ENCODE measurements at regions of chr14 and their contacts with region 1.

Region 1: GRCh38 chr14:103104654-103105452 is 10.3 kb downstream of the EXOC3L4 start:
- DNase-seq: no peak
- H3K4me3 ChIP-seq: no peak overlapping the region
- H3K27ac ChIP-seq: no peak overlapping the region
- H3K4me1 ChIP-seq: peaks cover 3% of the 10 kb centered on the region
- H3K27me3 ChIP-seq: peaks cover 28 to 29% of the 10 kb centered on the region in 2 experiments
- CTCF ChIP-seq: peak; percentile 99
- POLR2A ChIP-seq: no peak

Region 2: GRCh38 chr14:103078093-103078749 is 26.6 kb before region 1 on chr14:
- CTCF ChIA-PET with region 1: interaction called, 17 read pairs
- POLR2A ChIA-PET with region 1: no interaction called
- dilution Hi-C with region 1: no loop called
- intact Hi-C with region 1: no loop called
- DNase-seq: peak; percentile 69
- H3K4me3 ChIP-seq: no peak overlapping the region
- H3K27ac ChIP-seq: no peak overlapping the region
- H3K4me1 ChIP-seq: peaks cover 8% of the 10 kb centered on the region
- H3K27me3 ChIP-seq: peaks cover 0 to 2% of the 10 kb centered on the region in 2 experiments
- CTCF ChIP-seq: peak; percentile 63 to 90
- POLR2A ChIP-seq: no peak

Region 3: GRCh38 chr14:103141119-103141796 is 36.4 kb after region 1 on chr14:
- CTCF ChIA-PET with region 1: interaction called, 219 read pairs
- POLR2A ChIA-PET with region 1: no interaction called
- dilution Hi-C with region 1: no loop called
- intact Hi-C with region 1: loop called (anchors 1 kb)
- DNase-seq: peak; percentile 41
- H3K4me3 ChIP-seq: no peak overlapping the region
- H3K27ac ChIP-seq: no peak overlapping the region
- H3K4me1 ChIP-seq: no peaks in the 10 kb centered on the region
- H3K27me3 ChIP-seq: peaks cover 26 to 38% of the 10 kb centered on the region in 2 experiments
- CTCF ChIP-seq: peak; percentile 75 to 80
- POLR2A ChIP-seq: no peak

Region 4: DNA sequence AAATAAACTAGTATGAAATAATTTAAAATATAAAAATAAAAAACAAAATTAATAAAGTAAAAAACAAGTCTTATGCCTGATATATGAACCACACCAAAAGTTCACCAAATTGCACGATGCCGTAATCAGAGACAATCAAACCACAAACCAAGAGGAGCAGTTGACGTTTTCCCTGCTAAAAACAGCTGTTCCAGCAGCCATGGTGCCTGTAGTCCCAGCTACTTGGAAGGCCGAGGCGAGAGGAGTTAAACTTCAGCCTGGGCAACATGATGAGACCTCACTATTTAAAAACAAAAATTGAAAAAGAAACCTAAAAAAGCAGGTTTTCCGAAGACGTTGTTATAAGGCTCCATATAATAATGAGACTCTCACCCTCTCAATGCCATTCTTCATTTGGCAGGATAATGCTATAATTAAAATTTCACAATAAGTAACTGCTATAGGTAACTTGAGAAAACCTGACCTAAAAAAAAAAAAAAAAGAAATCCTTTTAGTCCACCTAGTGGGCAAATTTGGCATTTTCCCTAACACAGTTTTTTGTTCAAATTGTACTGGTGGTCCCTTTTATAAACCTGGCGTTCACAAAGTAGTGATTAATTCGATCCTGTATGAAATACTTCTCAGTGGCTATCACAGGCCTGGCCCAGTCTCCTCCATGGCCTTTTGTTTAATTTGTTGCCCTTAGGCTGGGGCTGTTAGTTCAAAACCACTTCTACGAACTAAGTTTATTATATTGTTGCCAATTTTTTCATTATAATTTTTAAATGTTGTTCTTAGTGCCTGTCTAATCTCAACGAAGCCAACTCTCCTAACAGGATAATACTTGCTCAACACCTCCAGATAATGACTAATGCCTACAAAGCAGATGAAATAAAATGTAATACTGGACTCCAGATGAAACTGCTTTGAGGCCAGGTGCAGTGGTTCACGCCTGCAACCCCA is 80.5 kb after region 1 on chr14:
- CTCF ChIA-PET with region 1: interaction called, 238 read pairs
- POLR2A ChIA-PET with region 1: no interaction called
- dilution Hi-C with region 1: no loop called
- intact Hi-C with region 1: loop called (anchors 1 kb)
- DNase-seq: peak; percentile 71
- H3K4me3 ChIP-seq: no peak overlapping the region
- H3K27ac ChIP-seq: no peak overlapping the region
- H3K4me1 ChIP-seq: no peaks in the 10 kb centered on the region
- H3K27me3 ChIP-seq: peaks cover 17 to 22% of the 10 kb centered on the region in 2 experiments
- CTCF ChIP-seq: peak; percentile 36 to 47
- POLR2A ChIP-seq: no peak

Region 5: DNA sequence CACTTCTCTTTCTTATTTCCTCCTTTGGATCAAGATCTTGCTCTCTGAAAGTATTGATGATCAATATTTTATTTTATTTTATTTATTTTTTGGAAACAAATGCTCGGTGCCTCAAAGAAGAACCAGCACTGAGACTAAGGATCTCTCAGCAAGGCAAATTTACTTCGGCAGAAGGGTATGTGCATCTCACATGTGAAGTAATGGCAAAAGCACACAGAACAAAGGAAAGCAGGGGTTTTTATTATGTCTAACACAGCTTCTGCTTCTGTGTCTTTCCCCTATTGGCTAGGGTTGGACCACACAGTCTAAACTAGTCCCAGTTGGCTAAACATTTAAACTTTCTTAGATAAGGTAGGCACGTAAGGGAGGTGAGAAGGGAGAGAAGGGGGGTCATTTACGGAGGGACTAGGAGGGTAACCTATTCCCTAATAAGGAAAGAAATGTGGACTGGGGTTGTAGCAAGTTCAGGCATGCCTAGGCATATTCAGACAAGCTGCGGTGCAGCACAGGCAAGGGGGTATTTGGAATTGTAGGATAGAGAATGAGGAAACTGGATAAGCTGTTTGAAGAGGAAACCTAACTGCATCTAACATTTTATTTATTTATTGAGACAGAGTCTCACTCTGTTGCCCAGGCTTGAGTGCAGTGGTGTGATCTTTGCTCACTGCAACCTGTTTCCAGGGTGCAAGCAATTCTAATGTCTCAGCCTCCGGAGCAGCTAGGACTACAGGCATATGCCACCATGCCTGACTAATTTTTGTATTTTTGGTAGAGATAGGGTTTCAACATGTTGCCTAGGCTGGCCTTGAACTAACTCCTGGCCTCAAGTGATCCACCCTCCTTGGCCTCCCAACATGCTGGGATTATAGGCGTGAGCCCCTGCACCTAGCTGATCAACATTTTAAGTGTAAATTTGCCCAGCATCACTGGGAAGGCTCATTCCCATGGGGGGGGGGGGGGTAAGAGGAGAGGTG is 139.2 kb after region 1 on chr14:
- CTCF ChIA-PET with region 1: interaction called, 11 read pairs
- POLR2A ChIA-PET with region 1: no interaction called
- dilution Hi-C with region 1: no loop called
- intact Hi-C with region 1: no loop called
- DNase-seq: no peak
- H3K4me3 ChIP-seq: no peak overlapping the region
- H3K27ac ChIP-seq: no peak overlapping the region
- H3K4me1 ChIP-seq: peaks cover 8% of the 10 kb centered on the region
- H3K27me3 ChIP-seq: peaks cover 0 to 9% of the 10 kb centered on the region in 2 experiments
- CTCF ChIP-seq: no peak
- POLR2A ChIP-seq: no peak

Region 6: DNA sequence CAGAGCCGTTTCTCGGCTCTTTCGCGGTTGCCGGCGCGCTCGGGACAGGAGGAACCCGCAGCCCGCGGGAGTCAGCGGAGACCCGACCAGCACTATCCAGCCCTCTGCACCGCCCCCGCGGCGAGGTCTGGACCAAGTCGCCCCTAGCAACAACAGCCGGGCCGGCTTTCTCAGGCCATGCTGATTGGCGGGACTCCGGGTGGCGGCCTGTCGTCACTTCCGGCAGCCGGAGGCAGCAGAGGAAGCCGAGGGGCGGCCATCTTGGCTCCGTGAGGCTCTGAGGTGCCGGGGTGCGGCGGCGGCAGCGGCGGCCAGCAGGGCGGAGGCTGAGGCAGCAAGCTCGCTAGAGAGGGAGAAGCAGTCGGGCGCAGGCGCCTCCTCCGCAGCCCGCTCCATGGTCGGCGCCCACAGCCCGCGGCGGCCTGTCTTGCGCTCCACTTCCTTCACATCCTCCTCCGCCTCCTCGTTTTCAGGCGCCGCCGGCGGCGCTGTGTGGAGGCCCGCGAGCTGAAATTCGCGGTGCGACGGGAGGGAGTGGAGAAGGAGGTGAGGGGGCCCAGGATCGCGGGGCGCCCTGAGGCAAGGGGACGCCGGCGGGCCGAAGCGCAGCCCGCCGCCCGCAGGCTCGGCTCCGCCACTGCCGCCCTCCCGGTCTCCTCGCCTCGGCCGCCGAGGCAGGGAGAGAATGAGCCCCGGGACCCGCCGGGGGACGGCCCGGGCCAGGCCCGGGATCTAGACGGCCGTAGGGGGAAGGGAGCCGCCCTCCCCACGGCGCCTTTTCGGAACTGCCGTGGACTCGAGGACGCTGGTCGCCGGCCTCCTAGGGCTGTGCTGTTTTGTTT is 280.5 kb after region 1 on chr14 and contains the start of gene MARK3:
- CTCF ChIA-PET with region 1: interaction called, 11 read pairs
- POLR2A ChIA-PET with region 1: no interaction called
- dilution Hi-C with region 1: no loop called
- intact Hi-C with region 1: loop called (anchors 5 kb)
- DNase-seq: peak; percentile 97
- H3K4me3 ChIP-seq: peak within 1 kb of the TSS; percentile 57 to 95 (median 82)
- H3K27ac ChIP-seq: peak within 1 kb of the TSS; percentile 74
- H3K4me1 ChIP-seq: peaks cover 26% of the 10 kb centered on the region
- H3K27me3 ChIP-seq: peaks cover 0 to 3% of the 10 kb centered on the region in 2 experiments
- CTCF ChIP-seq: peak; percentile 13 to 18
- POLR2A ChIP-seq: peak; percentile 88
- total RNA-seq, gene MARK3: 81.2 and 96.1 TPM in 2 replicates